ENCODE measurements at regions of chr6 and their contacts with region 1.

Region 1: DNA sequence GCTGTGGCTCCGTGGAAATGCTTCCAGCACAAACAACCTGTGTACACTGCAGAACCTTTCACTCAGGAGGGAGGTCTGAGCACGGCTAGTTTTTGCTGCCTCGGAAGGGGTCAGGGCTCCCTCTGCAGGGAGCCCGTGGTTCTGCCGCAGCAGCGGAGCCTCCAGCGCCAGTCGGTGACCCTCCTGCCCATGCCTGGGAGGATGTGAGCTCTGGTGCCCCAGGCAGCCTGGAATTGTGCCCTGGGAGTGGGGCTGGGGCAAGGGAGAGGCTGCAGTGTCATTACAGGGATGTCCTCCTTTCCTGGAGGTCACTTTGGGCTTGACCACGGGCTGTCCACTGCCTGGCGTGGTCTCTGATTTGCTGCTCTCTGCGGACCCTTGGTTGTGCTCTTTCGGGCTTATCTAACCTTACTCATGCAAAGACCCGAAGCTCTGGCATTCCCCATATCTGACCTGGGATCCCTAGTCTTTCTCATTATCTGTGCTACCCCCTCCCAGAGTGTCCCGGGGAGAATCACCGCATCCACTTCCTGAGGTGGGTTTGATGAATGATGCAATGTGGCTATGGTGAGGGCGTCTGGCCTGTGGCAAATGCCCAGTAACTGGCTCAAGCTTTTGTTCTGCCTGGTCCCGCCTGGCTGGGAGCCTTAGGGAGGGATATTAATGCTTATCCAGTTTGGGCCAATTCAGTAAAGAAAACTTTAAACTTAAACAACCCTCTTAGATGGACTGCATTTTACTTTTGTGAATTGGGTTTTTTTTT is 59.6 kb upstream of the TAGAP start:
- DNase-seq: no peak
- ATAC-seq: peak; percentile 77
- H3K4me3 ChIP-seq: no peak overlapping the region
- H3K27ac ChIP-seq: no peak overlapping the region; the same call in 1 of the 2 replicates
- H3K4me1 ChIP-seq: peaks cover 37% of the 10 kb centered on the region
- H3K27me3 ChIP-seq: no peaks in the 10 kb centered on the region
- CTCF ChIP-seq: peak; percentile 97 to 99 (median 98); a peak in 5 of 6 replicates
- EP300 ChIP-seq: no peak
- POLR2A ChIP-seq: 0 out of 2 replicates have a peak, but pooled peaks have one; percentile 22
- RAD21 ChIP-seq: peak; percentile 96

Region 2: DNA sequence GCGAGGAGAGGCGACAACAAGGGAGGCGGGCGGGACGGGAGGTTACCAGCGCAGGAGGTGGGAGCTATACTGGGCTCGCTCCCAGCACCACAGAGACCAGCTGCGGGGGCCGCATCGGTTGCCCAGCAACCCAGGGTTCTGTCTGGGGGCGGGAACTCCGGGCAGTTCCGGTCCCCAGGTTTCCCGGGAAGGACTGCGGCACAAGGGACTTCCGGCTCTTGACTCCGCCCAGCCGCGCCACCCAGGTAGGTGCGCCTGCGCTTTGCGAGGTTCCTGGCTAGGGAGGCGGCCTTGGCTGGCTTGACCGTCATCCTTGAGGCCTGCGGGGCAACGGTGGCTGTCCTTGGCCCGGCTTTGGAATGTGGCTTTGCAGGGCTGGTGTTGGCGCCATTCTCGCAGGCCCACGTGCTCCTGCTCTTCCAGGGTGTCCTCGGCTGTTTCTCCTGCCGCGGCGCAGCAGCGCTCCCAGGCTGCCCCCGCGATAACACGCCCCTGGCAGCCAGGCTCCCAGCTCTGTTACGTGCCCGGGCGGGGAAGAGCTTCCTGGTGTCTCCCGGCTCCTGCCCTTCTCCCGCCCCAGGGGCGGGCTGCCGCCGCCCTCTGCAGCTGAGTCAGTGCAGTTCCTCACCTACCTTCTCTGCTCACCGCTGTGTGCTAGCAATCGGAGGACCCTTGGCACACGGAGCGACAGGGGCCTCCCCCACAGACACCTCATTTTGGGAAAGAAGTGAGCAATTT is 104.5 kb before region 1 on chr6 and contains the start of gene RSPH3:
- CTCF ChIA-PET with region 1: interaction called, 631 read pairs
- POLR2A ChIA-PET with region 1: interaction called, 19 read pairs
- RAD21 ChIA-PET with region 1: interaction called, 12 read pairs
- SMC1A ChIA-PET with region 1: interaction called, 517 read pairs
- in situ Hi-C with region 1: loop called (anchors 5 kb)
- intact Hi-C with region 1: loop called (anchors 2 kb)
- DNase-seq: peak; percentile 77
- ATAC-seq: peak; percentile 96
- H3K4me3 ChIP-seq: peak within 1 kb of the TSS; percentile 81
- H3K27ac ChIP-seq: peak within 1 kb of the TSS; percentile 87
- H3K4me1 ChIP-seq: peaks cover 3% of the 10 kb centered on the region; the same call in 1 of the 2 replicates
- H3K27me3 ChIP-seq: no peaks in the 10 kb centered on the region
- CTCF ChIP-seq: peak in 1 of 3 experiments; percentile 34; a peak in 2 of 6 replicates
- EP300 ChIP-seq: no peak
- POLR2A ChIP-seq: peak; percentile 98
- RAD21 ChIP-seq: peak; percentile 21; the same call in 1 of the 2 replicates
- polyA plus RNA-seq, gene RSPH3: 0.40 to 0.51 TPM

Region 3: DNA sequence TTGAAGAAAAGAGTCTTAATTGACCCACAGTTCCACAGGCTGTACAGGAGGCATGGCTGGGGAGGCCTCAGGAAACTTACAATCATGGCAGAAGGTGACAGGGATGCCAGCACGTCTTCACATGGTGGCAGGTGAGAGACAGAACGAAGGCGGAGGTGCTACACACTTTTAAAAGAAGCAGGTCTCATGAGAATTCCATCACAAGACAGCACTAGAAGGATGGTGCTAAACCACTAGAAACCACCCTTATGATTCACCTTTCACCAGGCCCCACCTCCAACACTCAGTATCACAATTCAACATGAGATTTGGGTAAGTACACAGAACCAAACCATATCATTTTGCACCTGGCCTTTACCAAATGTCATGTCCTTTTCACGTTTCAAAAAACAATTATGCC is 80.5 kb before region 1 on chr6:
- CTCF ChIA-PET with region 1: interaction called, 22 read pairs
- POLR2A ChIA-PET with region 1: no interaction called
- RAD21 ChIA-PET with region 1: interaction called, 6 read pairs
- SMC1A ChIA-PET with region 1: interaction called, 20 read pairs
- in situ Hi-C with region 1: no loop called
- intact Hi-C with region 1: no loop called
- DNase-seq: no peak
- ATAC-seq: peak; percentile 63
- H3K4me3 ChIP-seq: no peak overlapping the region
- H3K27ac ChIP-seq: no peak overlapping the region
- H3K4me1 ChIP-seq: no peaks in the 10 kb centered on the region
- H3K27me3 ChIP-seq: no peaks in the 10 kb centered on the region
- CTCF ChIP-seq: no peak
- EP300 ChIP-seq: no peak
- POLR2A ChIP-seq: no peak
- RAD21 ChIP-seq: no peak

Region 4: DNA sequence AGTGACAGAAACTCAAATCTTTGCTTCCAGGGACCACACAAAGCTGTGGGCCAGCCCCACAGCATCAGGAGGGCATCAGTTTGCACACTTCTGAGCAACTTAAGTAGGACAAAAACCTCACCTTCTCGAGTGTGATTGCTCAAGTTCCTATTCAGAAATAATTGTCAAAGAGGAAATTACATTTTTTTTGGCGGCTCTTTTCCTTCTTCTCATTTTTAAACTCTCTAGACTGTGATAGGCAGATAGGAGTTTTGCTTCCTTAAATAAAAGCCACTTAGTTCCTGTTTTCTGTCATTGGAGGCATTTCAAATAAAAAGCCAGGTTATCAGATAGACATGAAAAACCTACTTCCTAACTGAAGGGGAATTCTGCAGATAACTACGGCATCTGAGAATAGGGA is 48.3 kb before region 1 on chr6:
- CTCF ChIA-PET with region 1: interaction called, 12 read pairs
- POLR2A ChIA-PET with region 1: interaction called, 3 read pairs
- RAD21 ChIA-PET with region 1: interaction called, 10 read pairs
- SMC1A ChIA-PET with region 1: interaction called, 5 read pairs
- in situ Hi-C with region 1: no loop called
- intact Hi-C with region 1: no loop called
- DNase-seq: no peak
- ATAC-seq: peak; percentile 66
- H3K4me3 ChIP-seq: no peak overlapping the region
- H3K27ac ChIP-seq: no peak overlapping the region
- H3K4me1 ChIP-seq: peaks cover 10% of the 10 kb centered on the region
- H3K27me3 ChIP-seq: no peaks in the 10 kb centered on the region
- CTCF ChIP-seq: no peak
- EP300 ChIP-seq: no peak
- POLR2A ChIP-seq: no peak
- RAD21 ChIP-seq: no peak

Region 5: GRCh38 chr6:159084493-159085091 is 19.8 kb before region 1 on chr6:
- CTCF ChIA-PET with region 1: interaction called, 20 read pairs
- POLR2A ChIA-PET with region 1: interaction called, 6 read pairs
- RAD21 ChIA-PET with region 1: interaction called, 14 read pairs
- SMC1A ChIA-PET with region 1: interaction called, 10 read pairs
- in situ Hi-C with region 1: no loop called
- intact Hi-C with region 1: no loop called
- DNase-seq: no peak
- ATAC-seq: peak; percentile 46; the same call in 2 of the 3 replicates
- H3K4me3 ChIP-seq: no peak overlapping the region
- H3K27ac ChIP-seq: no peak overlapping the region
- H3K4me1 ChIP-seq: peaks cover 4% of the 10 kb centered on the region; the same call in 1 of the 2 replicates
- H3K27me3 ChIP-seq: no peaks in the 10 kb centered on the region
- CTCF ChIP-seq: no peak
- EP300 ChIP-seq: no peak
- POLR2A ChIP-seq: no peak
- RAD21 ChIP-seq: no peak

Region 6: DNA sequence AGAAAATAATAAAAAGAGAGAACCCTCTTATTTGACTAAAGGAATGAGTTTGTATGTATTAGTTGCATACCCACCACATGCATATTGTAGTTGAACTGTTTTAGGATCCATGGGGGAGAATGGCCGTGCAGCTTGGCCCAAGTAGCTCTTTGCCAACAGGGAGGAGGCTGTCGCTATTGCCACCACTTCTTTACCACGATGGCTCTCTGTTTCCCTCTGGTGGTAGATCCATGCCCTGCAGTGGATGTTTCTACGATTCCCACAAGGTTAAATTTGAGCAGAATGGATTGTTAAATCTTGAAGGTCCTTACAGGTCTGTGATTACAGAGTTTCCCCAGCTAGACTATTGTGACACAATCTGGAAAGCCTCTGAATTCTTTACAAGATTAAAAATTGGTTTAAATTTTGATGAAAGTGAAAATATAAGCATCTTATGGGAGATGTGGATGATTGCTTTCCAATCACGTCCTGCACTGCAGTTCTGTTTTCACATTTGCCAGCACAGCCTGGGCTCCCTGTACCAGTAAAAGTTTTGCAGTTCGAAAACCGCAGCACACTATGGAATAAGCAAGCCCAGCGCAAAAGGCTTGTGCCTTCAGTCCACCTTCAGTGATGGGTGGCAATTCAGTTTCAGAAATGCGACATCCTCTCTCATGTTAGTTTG is 30.5 kb after region 1 on chr6:
- CTCF ChIA-PET with region 1: interaction called, 529 read pairs
- POLR2A ChIA-PET with region 1: interaction called, 12 read pairs
- RAD21 ChIA-PET with region 1: interaction called, 117 read pairs
- SMC1A ChIA-PET with region 1: interaction called, 292 read pairs
- in situ Hi-C with region 1: no loop called
- intact Hi-C with region 1: loop called (anchors 1 kb)
- DNase-seq: peak; percentile 36
- ATAC-seq: peak; percentile 95
- H3K4me3 ChIP-seq: no peak overlapping the region
- H3K27ac ChIP-seq: no peak overlapping the region
- H3K4me1 ChIP-seq: no peaks in the 10 kb centered on the region
- H3K27me3 ChIP-seq: peaks cover 0 to 2% of the 10 kb centered on the region in 2 experiments; a peak in 1 of 4 replicates
- CTCF ChIP-seq: peak; percentile 89 to 97 (median 96)
- EP300 ChIP-seq: no peak
- POLR2A ChIP-seq: no peak
- RAD21 ChIP-seq: peak; percentile 98